ENCODE measurements at regions of chr7 and their contacts with region 1.

Region 1: DNA sequence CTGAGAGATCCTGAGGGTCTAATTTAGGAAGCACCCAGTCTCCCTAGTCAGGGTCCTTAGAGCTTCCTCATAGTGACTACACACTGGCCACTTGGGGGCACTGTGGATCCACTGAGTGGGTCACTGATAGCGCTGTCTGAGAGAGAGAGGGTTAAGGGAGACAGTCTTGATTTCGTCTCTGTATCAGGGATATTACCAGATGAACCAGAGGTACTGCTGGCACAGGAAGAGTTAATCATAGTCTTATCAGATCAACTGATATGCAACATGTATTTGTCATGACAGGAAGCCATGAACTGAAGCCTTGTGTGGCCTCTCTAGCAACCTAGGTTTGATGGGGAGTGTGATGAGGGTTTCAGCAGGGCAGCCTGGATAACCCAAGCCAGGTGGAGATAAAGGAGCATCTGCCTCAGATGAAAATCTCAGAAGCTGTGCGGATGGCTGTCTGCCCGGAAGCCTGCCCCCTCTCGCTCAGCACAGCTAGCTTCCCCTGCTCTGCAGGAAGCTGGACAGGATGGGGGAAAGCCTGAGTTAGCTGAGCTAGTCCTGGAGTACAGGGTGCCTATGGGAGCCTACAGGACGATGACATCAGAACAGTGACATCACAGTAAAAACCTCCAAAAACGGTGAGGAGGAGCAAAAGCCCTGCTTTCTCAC is 214.0 kb upstream of the PRSS1 start:
- DNase-seq: peak; percentile 35 to 86 (median 66)
- ATAC-seq: peak; percentile 82
- H3K4me3 ChIP-seq: peak overlapping the region; percentile 15
- H3K4me3 Mint-ChIP-seq: peak overlapping the region; percentile 75
- H3K27ac ChIP-seq: peak overlapping the region; percentile 8 to 57
- H3K27ac Mint-ChIP-seq: peak overlapping the region; percentile 77
- H3K4me1 ChIP-seq: peaks cover 19% of the 10 kb centered on the region
- H3K4me1 Mint-ChIP-seq: peaks cover 41% of the 10 kb centered on the region
- H3K27me3 ChIP-seq: no peaks in the 10 kb centered on the region
- H3K27me3 Mint-ChIP-seq: no peaks in the 10 kb centered on the region
- CTCF ChIP-seq: peak; percentile 64

Region 2: DNA sequence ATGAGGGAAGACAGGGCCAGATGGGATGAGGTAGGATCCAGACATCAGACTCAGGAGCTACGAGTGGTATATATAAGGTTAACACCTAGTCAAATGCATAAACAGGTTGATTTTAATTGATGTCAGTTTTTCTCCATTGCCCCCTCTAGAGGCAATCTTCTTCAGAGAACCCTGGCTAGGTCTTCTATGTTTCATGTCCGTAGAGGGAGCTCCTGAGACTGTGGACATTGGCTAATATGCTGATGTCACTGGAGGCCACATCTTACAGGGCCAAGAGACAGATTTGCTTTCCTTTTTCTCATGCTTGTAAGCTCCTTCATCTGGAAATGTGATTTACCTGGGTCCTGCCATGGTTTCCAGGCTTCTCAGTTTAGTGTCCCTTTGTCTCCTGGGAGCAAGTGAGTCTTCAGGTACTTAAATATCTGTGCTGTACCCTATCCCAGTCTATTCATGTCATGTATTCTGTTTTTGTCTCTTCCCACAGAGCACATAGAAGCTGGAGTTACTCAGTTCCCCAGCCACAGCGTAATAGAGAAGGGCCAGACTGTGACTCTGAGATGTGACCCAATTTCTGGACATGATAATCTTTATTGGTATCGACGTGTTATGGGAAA is 52.4 kb after region 1 on chr7:
- CTCF ChIA-PET with region 1: interaction called, 5 read pairs
- POLR2A ChIA-PET with region 1: interaction called, 10 read pairs
- intact Hi-C with region 1: loop called in 1 of 2 experiments (anchors 5 kb)
- DNase-seq: peak in 3 of 14 experiments; percentile 53 to 74 (median 68)
- ATAC-seq: peak; percentile 89
- H3K4me3 ChIP-seq: peak overlapping the region; percentile 15
- H3K4me3 Mint-ChIP-seq: peak overlapping the region; percentile 48
- H3K27ac ChIP-seq: no peak overlapping the region
- H3K27ac Mint-ChIP-seq: peak overlapping the region; percentile 67
- H3K4me1 ChIP-seq: peaks cover 2% of the 10 kb centered on the region
- H3K4me1 Mint-ChIP-seq: peaks cover 8% of the 10 kb centered on the region
- H3K27me3 ChIP-seq: no peaks in the 10 kb centered on the region
- H3K27me3 Mint-ChIP-seq: no peaks in the 10 kb centered on the region
- CTCF ChIP-seq: peak; percentile 57

Region 3: GRCh38 chr7:142614116-142614515 is 78.9 kb after region 1 on chr7:
- CTCF ChIA-PET with region 1: no interaction called
- POLR2A ChIA-PET with region 1: no interaction called
- intact Hi-C with region 1: no loop called
- DNase-seq: no peak
- ATAC-seq: no peak
- H3K4me3 ChIP-seq: no peak overlapping the region
- H3K4me3 Mint-ChIP-seq: no peak overlapping the region
- H3K27ac ChIP-seq: no peak overlapping the region
- H3K27ac Mint-ChIP-seq: peak overlapping the region; percentile 17
- H3K4me1 ChIP-seq: peaks cover 4% of the 10 kb centered on the region
- H3K4me1 Mint-ChIP-seq: peaks cover 17% of the 10 kb centered on the region
- H3K27me3 ChIP-seq: no peaks in the 10 kb centered on the region
- H3K27me3 Mint-ChIP-seq: no peaks in the 10 kb centered on the region
- CTCF ChIP-seq: no peak

Region 4: DNA sequence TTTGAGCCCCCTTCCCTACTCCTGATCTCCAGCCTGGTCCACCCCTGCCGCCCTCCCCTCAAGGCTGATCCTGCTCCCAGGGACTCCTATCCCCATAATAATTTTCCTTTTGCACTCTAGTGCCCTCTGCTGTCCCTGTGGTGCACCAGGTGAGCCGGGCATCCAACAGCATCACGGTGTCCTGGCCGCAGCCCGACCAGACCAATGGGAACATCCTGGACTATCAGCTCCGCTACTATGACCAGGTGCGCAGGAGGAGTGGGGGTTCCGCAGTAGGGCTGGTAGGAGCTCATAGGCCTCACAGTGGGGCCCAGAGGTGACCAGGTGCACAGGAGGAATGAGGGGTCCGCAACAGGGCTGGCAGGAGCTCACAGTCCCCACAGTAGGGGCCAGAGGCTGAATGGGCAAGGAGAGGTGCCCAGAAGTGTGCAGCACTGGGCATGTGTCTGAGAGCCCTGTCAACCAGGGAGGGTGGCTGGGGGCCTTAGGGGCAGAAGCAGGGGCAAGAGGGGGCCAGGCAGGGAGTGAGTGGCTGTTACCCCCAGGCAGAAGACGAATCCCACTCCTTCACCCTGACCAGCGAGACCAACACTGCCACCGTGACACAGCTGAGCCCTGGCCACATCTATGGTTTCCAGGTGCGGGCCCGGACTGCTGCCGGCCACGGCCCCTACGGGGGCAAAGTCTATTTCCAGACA is 331.3 kb after region 1 on chr7:
- CTCF ChIA-PET with region 1: interaction called, 3 read pairs
- POLR2A ChIA-PET with region 1: no interaction called
- intact Hi-C with region 1: loop called in 1 of 2 experiments (anchors 5 kb)
- DNase-seq: peak in 4 of 14 experiments; percentile 26 to 47 (median 40)
- ATAC-seq: peak; percentile 11
- H3K4me3 ChIP-seq: no peak overlapping the region
- H3K4me3 Mint-ChIP-seq: no peak overlapping the region
- H3K27ac ChIP-seq: no peak overlapping the region
- H3K27ac Mint-ChIP-seq: no peak overlapping the region
- H3K4me1 ChIP-seq: peaks cover 9% of the 10 kb centered on the region
- H3K4me1 Mint-ChIP-seq: peaks cover 6% of the 10 kb centered on the region
- H3K27me3 ChIP-seq: no peaks in the 10 kb centered on the region
- H3K27me3 Mint-ChIP-seq: no peaks in the 10 kb centered on the region
- CTCF ChIP-seq: peak; percentile 61

Measured in CD4-positive, alpha-beta T cell (primary cell).